ENCODE measurements at regions of chr9 and their contacts with region 1.

Region 1: DNA sequence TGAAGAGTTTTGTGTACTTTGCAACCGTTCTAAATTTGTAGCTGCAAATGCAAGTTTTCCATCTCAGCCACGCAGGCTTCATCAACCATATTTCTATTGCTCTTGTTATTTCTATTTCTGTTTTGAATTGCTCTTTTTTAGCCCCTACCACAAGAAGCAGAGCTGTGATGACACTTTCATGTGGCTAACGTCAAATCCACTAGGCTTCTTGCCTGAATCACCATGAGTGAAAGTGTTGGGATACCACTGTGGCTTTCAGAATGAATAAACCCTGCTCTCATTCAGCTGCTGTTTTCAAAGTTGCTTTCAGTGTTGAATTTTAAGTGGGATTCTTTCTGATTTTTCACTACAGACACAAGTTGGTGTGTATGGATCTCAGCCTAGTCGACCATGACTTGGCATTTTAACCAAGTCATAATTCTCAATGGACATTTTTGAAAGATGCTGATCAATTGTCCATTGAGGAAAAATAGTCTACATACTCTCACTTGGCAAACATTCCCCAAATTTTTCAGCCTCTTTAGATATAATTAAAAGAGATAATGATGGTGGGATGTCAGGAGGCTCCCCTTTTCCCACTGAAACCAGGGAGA is 41.0 kb upstream of the MTAP start:
- DNase-seq: peak; percentile 42
- H3K4me3 Mint-ChIP-seq: no peak overlapping the region
- H3K27ac Mint-ChIP-seq: no peak overlapping the region
- H3K4me1 Mint-ChIP-seq: peaks cover 10% of the 10 kb centered on the region
- H3K27me3 Mint-ChIP-seq: peaks cover 40% of the 10 kb centered on the region

Region 2: GRCh38 chr9:21591221-21592062 is 170.0 kb before region 1 on chr9:
- CTCF ChIA-PET with region 1: no interaction called
- POLR2A ChIA-PET with region 1: no interaction called
- intact Hi-C with region 1: loop called (anchors 5 kb)
- DNase-seq: peak; percentile 80
- H3K4me3 Mint-ChIP-seq: no peak overlapping the region
- H3K27ac Mint-ChIP-seq: no peak overlapping the region
- H3K4me1 Mint-ChIP-seq: peaks cover 15% of the 10 kb centered on the region
- H3K27me3 Mint-ChIP-seq: no peaks in the 10 kb centered on the region

Region 3: DNA sequence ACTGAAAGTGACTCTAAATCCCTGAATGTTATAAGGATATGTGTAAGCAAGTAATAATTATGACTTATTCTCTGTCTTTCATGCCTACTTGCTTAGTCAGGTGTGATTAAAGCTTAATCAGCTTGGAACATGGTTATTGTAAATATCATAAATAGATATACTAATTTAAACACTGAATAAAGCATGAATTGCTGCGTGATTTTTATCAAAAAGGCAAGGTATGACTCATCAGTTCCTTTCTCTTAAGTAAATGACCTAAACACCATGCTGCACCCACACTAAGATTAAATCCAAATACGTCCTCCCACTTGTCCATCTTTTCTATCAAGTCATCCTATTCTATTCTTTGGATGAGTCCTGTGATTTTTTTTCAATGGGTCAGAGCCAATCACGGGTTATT is 83.6 kb before region 1 on chr9:
- CTCF ChIA-PET with region 1: no interaction called
- POLR2A ChIA-PET with region 1: no interaction called
- intact Hi-C with region 1: no loop called
- DNase-seq: no peak
- H3K4me3 Mint-ChIP-seq: no peak overlapping the region
- H3K27ac Mint-ChIP-seq: no peak overlapping the region
- H3K4me1 Mint-ChIP-seq: peaks cover 7% of the 10 kb centered on the region
- H3K27me3 Mint-ChIP-seq: peaks cover 1% of the 10 kb centered on the region

Region 4: GRCh38 chr9:21777701-21778100 is 16.3 kb after region 1 on chr9:
- CTCF ChIA-PET with region 1: no interaction called
- POLR2A ChIA-PET with region 1: no interaction called
- intact Hi-C with region 1: loop called (anchors 1 kb)
- DNase-seq: no peak
- H3K4me3 Mint-ChIP-seq: no peak overlapping the region
- H3K27ac Mint-ChIP-seq: no peak overlapping the region
- H3K4me1 Mint-ChIP-seq: peaks cover 3% of the 10 kb centered on the region
- H3K27me3 Mint-ChIP-seq: no peaks in the 10 kb centered on the region

Region 5: GRCh38 chr9:22244141-22245011 is 483.0 kb after region 1 on chr9:
- CTCF ChIA-PET with region 1: no interaction called
- POLR2A ChIA-PET with region 1: no interaction called
- intact Hi-C with region 1: no loop called
- DNase-seq: peak; percentile 48
- H3K4me3 Mint-ChIP-seq: no peak overlapping the region
- H3K27ac Mint-ChIP-seq: no peak overlapping the region
- H3K4me1 Mint-ChIP-seq: peaks cover 20% of the 10 kb centered on the region
- H3K27me3 Mint-ChIP-seq: peaks cover 16% of the 10 kb centered on the region

Measured in activated CD4-positive, alpha-beta memory T cell treated with anti-CD3 and anti-CD28 coated beads for 36 hours (primary cell).